AG04449 (cell line): ENCODE measurements at regions of chr16 and their contacts with region 1.

Region 1: GRCh38 chr16:20900299-20901067 is at the starts of genes DCUN1D3 and LYRM1:
- DNase-seq: peak; percentile 97
- H3K4me3 ChIP-seq: peak within 1 kb of the TSS; percentile 94
- CTCF ChIP-seq: no peak

Region 2: DNA sequence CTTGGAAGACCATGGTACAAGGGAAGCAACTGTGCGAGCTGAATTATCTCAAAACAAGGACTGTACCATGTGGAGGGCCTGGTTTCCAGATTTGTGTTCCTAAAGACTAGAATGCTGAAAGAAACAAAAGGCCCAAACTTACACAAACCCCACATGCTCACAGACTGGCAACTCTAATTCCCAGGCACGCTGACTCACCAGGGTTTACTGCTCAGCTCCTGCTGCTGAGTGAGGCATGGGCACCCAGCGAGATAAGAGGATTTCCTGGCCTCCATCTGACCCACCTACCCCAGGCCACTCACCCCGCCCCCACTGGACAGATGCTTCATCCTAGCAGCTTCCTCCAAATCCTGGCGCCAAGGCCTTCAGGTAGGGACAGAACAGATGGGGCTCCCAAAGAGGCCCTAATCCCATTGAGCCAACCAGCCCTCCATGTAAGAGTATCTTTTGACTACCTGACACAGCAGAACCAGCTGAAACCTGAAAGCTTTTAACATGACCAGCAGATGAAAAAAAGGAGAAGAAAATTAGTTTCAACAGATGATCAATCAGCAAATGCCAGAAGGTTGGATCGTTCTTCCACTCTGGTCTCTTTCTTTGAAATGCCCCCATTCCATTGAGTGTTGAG is 34.2 kb before region 1 on chr16:
- CTCF ChIA-PET with region 1: no interaction called
- POLR2A ChIA-PET with region 1: interaction called, 11 read pairs
- DNase-seq: peak; percentile 38
- H3K4me3 ChIP-seq: no peak overlapping the region
- CTCF ChIP-seq: no peak

Region 3: GRCh38 chr16:20910781-20911321 is 10.4 kb after region 1 on chr16:
- CTCF ChIA-PET with region 1: no interaction called
- POLR2A ChIA-PET with region 1: interaction called, 12 read pairs
- DNase-seq: peak; percentile 78
- H3K4me3 ChIP-seq: no peak overlapping the region
- CTCF ChIP-seq: no peak